K562 (cell line): ENCODE measurements at regions of chr19 and their contacts with region 1.

Region 1: GRCh38 chr19:1103708-1104310 is at the start of gene GPX4:
- DNase-seq: peak; percentile 95 to 100 (median 97)
- ATAC-seq: peak; percentile 95
- H3K4me3 ChIP-seq: peak within 1 kb of the TSS; percentile 97
- H3K27ac ChIP-seq: peak within 1 kb of the TSS; percentile 98
- H3K4me1 ChIP-seq: peaks cover 27 to 70% of the 10 kb centered on the region in 2 experiments
- H3K27me3 ChIP-seq: no peaks in the 10 kb centered on the region
- CTCF ChIP-seq: no peak
- EP300 ChIP-seq: no peak
- POLR2A ChIP-seq: peak; percentile 97
- RAD21 ChIP-seq: no peak
- polyA plus RNA-seq, gene GPX4: 61.4 to 125 TPM

Region 2: DNA sequence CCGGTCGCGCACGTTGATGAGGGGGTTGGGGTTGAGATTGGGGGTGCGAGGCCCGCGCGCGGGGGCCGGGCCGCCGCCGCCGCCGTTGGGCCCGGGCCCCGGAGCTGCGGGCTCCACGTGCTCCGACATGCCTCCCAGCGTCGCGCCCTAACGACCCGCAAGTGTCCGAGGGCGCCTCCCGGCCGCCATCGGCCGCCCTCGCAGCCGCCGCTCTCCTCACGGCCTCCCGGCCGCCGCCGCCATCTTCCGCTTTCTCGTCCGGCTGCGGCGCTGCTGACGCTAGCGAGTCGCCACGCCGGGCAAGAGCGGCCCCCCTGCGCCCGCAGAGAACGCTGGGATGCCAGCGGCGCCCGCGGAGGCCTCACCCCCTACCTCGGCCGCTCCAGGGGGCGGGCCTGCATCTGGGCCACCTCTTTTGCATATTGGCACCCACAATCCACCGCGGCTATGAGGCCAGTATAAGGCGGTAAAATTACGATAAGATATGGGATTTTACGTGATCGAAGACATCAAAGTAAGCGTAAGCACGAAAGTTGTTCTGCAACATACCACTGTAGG is 82.9 kb before region 1 on chr19 and contains the start of gene TMEM259:
- CTCF ChIA-PET with region 1: no interaction called
- POLR2A ChIA-PET with region 1: no interaction called
- in situ Hi-C with region 1: no loop called
- intact Hi-C with region 1: loop called (anchors 2 kb)
- DNase-seq: peak; percentile 87 to 97 (median 92)
- ATAC-seq: peak; percentile 90
- H3K4me3 ChIP-seq: peak within 1 kb of the TSS; percentile 94
- H3K27ac ChIP-seq: peak within 1 kb of the TSS; percentile 100
- H3K4me1 ChIP-seq: peaks cover 27 to 76% of the 10 kb centered on the region in 2 experiments
- H3K27me3 ChIP-seq: no peaks in the 10 kb centered on the region
- CTCF ChIP-seq: no peak
- EP300 ChIP-seq: no peak
- POLR2A ChIP-seq: no peak
- RAD21 ChIP-seq: no peak
- polyA plus RNA-seq, gene TMEM259: 0.52 to 0.57 TPM

Region 3: DNA sequence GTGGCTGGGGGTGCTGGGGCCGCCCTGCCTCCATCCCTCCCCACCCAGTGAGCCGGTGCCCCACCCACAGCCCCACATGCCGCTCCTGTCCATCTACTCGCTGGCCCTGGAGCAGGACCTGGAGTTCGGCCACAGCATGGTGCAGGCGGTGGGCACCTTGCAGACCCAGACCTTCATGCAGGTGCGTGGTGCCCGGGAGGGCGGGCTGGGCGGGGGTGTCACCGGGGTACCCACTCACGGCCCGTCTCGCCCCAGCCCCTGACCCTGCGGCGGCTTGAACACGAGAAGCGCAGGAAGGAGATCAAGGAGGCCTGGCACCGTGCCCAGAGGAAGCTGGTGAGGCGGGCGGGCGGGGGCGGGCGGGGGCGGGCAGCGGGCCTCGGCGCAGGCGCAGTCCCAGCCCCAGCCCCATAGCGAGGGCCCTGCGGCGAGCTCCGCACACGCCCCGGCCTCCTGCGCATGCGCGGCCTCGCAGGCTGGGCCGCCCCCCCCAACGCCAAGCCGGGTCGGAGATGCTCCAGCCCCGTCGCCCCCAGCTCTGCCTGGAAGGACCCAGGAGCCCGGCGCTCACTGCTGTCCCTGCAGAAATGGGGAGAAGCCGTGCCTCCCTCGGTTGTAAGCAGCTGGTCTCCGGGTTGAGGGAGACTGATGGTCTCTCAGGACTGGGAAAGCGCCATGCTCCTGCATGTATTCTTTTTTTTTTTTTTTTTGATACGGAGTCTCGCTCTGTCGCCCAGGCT is 29.1 kb before region 1 on chr19:
- CTCF ChIA-PET with region 1: no interaction called
- POLR2A ChIA-PET with region 1: interaction called, 11 read pairs
- in situ Hi-C with region 1: no loop called
- intact Hi-C with region 1: no loop called
- DNase-seq: peak; percentile 86 to 98 (median 96)
- ATAC-seq: peak; percentile 87
- H3K4me3 ChIP-seq: peak overlapping the region; percentile 47
- H3K27ac ChIP-seq: peak overlapping the region; percentile 78; the same call in 2 of the 3 replicates
- H3K4me1 ChIP-seq: peaks cover 32 to 66% of the 10 kb centered on the region in 2 experiments
- H3K27me3 ChIP-seq: no peaks in the 10 kb centered on the region
- CTCF ChIP-seq: no peak
- EP300 ChIP-seq: no peak
- POLR2A ChIP-seq: no peak
- RAD21 ChIP-seq: no peak

Region 4: DNA sequence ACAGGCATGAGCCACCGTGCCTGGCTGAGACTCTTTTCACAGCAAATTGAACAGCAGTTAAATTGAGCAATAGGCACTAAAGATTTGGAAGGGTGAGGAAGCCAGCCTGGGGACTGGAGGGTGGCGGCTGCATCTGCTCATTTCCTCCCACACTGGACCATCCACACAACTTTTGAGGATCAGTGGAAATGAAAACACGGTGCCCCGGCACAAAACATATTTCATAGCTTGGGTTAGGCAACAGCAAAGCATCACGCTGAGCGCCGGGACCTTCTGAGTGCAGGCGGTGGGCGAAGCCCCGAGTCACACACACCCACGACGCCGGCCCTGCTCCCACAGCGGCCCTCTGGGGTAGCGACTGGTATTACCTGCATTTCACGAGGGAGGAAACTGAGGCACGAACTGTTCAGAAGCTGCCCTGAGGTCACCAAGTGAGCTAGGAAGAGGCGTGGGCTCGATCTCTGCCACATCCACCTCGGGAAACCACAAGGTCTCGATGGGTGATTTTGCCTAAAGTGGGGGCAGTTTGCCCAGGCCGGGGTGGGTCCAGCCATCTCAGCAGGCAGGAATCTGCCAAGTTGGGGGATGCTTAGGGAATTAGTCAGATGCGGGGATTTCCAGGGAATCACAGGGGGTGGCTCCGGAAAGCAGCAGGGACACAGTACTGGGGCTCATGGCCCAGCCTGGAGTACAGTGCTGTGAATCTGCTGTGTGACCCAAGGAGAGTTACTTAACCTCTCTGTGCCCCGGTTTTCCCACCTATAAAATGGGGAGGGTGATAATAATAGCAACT is 73.7 kb after region 1 on chr19:
- CTCF ChIA-PET with region 1: no interaction called
- POLR2A ChIA-PET with region 1: no interaction called
- in situ Hi-C with region 1: no loop called
- intact Hi-C with region 1: no loop called
- DNase-seq: no peak
- ATAC-seq: no peak
- H3K4me3 ChIP-seq: no peak overlapping the region
- H3K27ac ChIP-seq: no peak overlapping the region
- H3K4me1 ChIP-seq: peaks cover 18 to 48% of the 10 kb centered on the region in 2 experiments
- H3K27me3 ChIP-seq: no peaks in the 10 kb centered on the region
- CTCF ChIP-seq: 0 out of 6 replicates have a peak, but pooled peaks of 1 of the 3 experiments have one; percentile 3
- EP300 ChIP-seq: no peak
- POLR2A ChIP-seq: no peak
- RAD21 ChIP-seq: no peak